Activated CD4-positive, alpha-beta memory T cell treated with anti-CD3 and anti-CD28 coated beads, Interleukin-2, amount 10 ng/mL, durations not matched to agents 7 days and 5 days (primary cell): ENCODE measurements at regions of chr17 and their contacts with region 1.

Region 1: DNA sequence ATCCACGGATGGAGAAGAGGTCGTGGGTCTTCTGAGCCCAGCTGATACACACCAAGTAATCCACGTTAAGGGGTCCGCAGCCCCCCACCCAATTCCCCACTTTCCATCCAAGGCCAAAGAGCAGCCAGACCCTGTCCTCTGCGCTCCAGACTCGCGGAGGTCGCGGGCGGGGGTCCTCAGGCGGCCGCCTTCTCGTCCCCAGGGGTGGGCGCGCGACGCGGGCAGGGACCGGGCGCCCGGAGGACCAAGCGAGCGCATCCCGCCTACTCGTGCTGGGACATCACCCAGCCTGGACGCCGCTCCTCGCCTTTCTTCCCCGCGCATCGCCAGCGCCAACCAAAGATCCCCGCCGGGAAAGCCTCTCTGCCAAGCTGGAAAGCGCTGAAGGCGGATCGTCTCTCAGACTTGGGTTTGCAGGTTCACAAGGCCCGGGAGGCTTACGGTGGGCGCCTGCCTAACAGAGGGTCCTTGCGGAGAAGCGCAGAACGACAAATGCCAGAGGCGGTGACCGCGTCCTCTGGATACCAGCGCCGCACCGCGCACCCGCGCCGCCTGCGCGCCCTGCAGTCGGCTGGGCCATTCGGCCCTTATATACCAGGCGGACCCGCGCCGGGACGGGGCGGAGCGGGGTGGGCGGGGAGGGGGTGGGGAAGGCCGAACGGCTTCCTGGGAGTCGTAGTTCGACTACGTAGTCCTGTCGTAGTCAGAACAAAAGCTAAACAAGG is 471.6 kb downstream of the SOX9 start:
- DNase-seq: peak; percentile 85
- H3K4me3 Mint-ChIP-seq: peak overlapping the region; percentile 92
- H3K27ac Mint-ChIP-seq: peak overlapping the region; percentile 50
- H3K4me1 Mint-ChIP-seq: peaks cover 43% of the 10 kb centered on the region
- H3K27me3 Mint-ChIP-seq: peaks cover 43% of the 10 kb centered on the region

Region 2: DNA sequence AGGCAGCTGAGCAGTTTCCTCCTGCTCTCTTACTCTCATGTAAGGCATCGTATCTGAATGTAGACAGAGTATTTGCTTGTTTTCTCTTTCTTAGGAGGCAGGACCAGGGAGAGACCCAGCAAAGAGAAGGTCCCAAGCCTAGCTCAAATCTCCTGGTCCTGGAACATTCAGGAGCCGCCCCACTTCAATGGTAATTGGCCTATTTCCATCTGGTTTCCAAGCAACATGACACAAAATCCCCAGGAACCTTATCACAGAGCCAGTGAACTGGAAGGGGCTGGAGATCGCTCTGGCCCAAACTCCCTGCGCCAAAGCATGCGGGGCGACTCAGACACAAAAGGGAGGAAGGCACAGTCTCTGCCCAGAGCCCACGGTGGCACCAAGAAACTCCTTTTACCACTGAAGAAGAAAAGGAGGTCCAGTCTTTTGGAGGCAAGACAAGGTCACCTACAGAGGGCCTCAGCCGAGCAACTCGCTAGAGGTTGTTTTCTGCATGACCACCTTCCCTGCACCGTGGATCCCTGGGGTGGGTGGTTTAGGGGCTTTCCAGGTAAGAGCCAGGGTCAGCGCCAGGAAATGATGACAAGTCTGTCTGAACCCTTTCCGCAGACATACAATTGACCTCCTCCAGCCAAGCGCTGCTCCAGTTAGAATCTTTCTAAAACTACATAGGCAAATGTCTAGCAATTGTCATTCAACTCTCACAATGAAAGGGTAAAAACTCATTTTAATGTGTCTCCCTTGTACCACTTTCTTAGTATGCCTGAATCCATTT is 76.9 kb before region 1 on chr17:
- CTCF ChIA-PET with region 1: no interaction called
- POLR2A ChIA-PET with region 1: no interaction called
- DNase-seq: no peak
- H3K4me3 Mint-ChIP-seq: no peak overlapping the region
- H3K27ac Mint-ChIP-seq: no peak overlapping the region
- H3K4me1 Mint-ChIP-seq: no peaks in the 10 kb centered on the region
- H3K27me3 Mint-ChIP-seq: no peaks in the 10 kb centered on the region

Region 3: DNA sequence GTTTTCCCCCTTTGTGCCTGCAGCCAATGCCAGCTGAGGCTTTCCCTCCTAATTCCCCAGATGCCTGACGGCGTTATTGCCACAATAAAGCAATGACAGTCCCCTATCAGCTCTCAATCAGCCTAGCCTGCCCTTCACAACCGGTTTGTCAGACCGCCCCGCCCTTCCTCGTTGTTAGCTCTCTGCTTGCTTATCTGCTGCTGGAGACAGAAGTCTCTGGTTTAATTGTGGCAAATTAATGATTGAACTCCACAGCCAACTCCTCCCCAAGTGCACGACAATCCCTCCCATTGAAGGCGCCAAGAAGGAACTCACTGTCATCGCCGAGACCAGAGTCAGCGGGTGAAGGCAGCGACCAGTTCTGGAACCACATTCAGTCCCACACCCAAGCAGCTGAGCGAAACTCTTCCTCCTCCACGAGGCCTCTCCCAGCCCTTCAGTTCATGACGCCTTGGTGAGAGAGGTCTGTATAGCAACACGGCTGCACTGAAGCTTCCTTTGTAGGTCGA is 25.7 kb after region 1 on chr17:
- CTCF ChIA-PET with region 1: interaction called, 3 read pairs
- POLR2A ChIA-PET with region 1: interaction called, 12 read pairs
- DNase-seq: peak; percentile 72
- H3K4me3 Mint-ChIP-seq: peak overlapping the region; percentile 63
- H3K27ac Mint-ChIP-seq: peak overlapping the region; percentile 83
- H3K4me1 Mint-ChIP-seq: peaks cover 33% of the 10 kb centered on the region
- H3K27me3 Mint-ChIP-seq: peaks cover 30% of the 10 kb centered on the region

Region 4: GRCh38 chr17:72705905-72706395 is 113.5 kb after region 1 on chr17:
- CTCF ChIA-PET with region 1: interaction called, 3 read pairs
- POLR2A ChIA-PET with region 1: interaction called, 11 read pairs
- DNase-seq: no peak
- H3K4me3 Mint-ChIP-seq: no peak overlapping the region
- H3K27ac Mint-ChIP-seq: peak overlapping the region; percentile 85
- H3K4me1 Mint-ChIP-seq: peaks cover 63% of the 10 kb centered on the region
- H3K27me3 Mint-ChIP-seq: no peaks in the 10 kb centered on the region